ENCODE measurements at regions of chr10 and their contacts with region 1.

Region 1: DNA sequence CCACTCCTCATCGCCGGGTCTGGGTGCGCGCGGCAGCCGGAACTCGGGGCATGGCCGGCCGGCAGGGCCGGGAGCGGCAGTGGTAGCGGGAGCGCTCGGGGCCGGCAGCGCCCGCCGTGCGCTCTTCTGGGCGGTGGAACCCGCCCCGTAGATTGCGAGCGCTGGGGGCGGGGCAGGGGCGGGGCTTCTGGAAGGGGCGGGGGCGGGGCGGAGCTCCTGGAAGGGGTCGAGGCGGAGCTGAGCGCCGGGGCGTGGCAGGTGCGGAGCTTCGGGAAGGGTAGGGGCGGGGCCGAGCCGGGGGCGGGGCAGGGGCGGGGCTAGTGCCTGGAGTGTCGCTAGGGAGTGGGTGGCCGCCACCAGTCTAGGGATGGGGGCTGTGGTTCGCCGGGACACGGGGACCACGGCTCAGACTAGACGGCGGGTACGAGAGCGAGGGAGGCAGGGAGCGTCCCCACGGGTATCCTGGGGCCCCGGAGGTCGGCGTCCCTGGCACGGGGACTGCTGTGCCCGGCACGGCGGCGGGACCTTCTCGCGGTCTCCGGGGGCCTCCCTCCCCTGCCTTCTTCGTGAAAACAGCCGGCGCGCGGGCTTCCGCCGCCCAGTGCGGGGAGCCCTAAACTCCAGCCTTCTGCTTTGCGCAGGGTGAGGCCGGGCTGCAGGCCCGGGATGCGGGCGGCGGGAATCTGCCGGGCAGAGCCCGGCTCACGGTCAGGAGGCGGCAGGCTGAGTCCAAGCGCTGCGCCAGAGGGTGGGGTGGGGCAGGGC is at the start of gene STK32C:
- DNase-seq: peak; percentile 98
- ATAC-seq: peak; percentile 97
- total RNA-seq, gene STK32C: 7.0 TPM

Region 2: DNA sequence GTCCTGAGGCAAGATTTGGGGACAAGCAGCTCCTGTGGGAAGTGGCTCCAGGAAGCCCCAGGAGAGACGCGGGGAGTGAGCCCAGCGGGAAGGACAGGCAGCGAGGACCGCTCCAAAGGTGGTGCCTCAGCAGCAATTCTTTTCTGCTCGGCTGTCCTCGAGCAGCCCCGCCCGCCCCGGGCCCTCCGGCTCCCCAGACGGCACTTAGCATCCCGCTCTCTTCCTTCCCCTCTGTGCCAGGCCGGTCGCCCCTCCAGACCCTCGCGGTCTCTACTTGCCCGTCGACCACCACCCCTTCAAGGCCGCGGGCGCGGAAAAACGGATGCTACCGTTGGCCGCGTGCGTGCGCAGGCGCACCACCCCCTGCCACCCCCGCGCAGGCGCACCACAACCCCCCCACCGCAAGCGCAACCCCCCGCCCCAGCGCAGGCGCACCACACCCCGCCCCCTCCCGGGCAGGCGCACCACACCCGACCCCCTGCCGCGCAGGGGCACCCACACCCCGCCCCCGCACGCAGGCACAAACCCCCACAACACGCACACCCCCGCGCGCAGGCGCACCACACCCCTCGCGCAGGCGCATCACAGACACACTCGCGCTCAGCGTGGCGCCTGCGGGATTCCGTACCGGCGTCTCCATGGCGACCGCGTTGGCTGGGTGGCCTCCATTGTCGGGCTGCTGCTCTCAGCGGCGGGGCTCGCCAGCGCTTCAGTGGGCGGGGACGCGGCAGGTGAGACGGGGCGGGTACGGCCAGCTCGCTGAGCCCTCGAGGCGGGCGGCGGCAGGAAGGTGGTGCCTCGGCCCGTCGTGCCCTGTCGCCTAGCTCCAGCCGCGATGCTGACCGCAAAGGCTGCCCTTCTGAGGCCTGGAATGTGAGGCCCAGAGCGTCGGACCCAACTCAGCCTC is 23.8 kb after region 1 on chr10 and contains the start of gene LRRC27:
- intact Hi-C with region 1: loop called (anchors 1 kb)
- DNase-seq: peak; percentile 99
- ATAC-seq: peak; percentile 95
- total RNA-seq, gene LRRC27: 4.2 TPM

Region 3: DNA sequence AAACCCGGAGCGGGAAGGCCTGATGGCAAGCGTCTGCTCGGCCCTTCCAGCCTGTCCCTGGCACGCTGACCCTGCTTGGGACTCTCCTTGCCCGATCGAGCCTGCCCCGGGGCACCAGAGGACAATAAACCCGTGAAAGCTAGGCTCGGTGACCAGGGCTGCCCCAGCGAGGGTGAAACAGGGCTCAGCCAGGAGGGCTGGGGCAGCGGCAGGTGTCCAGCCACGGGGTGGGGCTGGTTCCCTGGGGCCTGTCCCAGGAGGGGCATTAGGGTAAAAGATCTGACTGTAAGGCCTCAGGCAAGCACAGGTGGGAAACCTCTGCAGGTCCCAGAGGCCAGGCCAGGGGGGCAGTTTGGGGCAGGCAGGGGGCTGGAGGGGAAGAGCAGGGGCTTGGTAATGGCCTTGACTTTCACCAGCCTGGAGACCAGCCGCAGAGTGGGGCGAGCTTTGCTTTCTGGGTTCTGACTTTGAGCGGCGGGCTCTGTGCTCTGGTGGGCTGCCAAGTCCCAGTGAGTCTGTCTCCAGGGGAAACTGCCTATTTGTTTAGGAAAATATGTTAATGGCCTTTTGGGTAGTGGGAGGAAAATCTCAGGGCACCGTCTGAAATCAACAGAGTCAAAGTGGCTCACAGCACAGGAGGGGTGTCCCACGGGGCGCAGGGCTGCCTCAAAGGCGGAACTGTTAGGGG is 161.3 kb after region 1 on chr10:
- intact Hi-C with region 1: no loop called
- DNase-seq: no peak
- ATAC-seq: no peak